ENCODE measurements at regions of chr2 and their contacts with region 1.

Region 1: DNA sequence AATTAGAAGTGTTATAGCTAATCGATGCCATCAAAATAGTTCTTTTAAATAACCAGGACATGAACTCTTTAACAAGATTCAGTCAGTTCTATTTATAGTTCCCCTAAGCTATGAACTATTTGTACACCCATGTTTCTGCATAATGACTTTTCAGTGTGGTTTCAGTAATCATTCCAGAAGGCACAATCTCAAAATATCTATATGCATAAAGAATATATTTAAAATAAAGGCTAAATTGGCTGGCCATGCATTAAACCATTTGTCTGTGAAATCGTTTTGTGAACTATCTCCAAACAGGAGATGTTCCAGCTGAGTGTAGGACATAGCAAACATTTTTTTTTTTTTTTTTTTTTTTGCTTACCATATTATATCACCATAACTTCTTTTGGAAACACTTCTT is 719.3 kb downstream of the PLCL1 start:
- DNase-seq: no peak
- H3K4me3 ChIP-seq: no peak overlapping the region
- CTCF ChIP-seq: no peak
- POLR2A ChIP-seq: no peak

Region 2: DNA sequence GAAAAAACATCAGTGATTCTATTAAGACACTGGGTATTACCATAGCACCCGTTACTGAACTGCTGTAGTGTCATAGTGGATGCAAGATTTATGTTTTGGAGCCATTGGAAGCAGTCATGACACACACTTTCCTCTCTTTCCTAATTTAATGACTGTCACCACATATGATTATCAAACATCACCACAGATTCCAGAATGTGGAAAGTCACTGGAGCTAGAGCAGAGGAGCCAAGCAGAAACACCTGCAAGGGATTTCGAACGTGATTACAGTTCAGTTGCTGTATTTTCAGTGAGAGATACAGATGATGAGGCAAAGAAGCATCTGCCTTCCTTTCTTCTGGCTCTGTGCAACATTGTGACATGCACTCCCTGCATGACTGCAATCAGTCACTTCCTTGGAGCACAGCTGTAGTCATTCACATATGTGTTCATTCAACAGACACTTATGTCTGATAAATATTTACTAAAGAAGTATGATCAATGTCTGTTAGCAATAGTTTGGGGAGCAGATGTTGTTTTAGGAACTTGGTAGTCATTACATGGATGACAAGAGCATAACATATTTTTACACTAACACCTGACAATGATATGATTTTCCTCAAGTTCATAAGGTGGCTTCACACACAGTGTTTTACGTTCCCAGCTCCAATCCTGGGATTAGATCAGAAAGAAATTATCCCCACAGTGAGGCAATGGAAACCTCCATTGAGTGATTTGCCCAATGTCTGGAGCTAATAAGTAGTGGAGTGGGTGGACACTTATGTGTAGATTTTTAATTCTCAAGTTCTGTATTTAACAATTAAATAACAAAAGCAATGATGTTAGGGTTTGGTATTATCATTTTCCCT is 302.7 kb before region 1 on chr2:
- intact Hi-C with region 1: loop called (anchors 5 kb)
- DNase-seq: no peak
- H3K4me3 ChIP-seq: no peak overlapping the region
- CTCF ChIP-seq: no peak
- POLR2A ChIP-seq: no peak

Region 3: GRCh38 chr2:198873503-198874471 is 350.1 kb after region 1 on chr2:
- intact Hi-C with region 1: no loop called
- DNase-seq: no peak
- H3K4me3 ChIP-seq: no peak overlapping the region
- CTCF ChIP-seq: no peak
- POLR2A ChIP-seq: no peak

Region 4: DNA sequence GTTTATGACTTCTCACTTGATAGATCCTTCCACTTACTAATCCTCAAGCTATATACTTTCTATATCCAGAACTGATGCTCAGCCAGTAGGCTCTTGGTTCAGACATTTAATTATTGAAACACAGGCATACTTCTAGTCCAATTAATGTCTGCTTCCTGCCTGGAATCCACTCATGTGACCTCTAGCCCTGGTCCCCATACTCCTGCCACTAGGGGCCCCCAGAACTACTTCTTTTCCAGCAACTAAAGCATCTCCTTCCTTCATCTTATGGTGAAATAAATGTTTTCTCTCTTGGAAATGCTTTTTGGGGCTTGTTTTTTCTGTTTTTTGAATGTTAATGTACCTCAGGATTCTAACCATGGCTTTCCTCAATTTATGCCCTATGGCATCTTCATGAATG is 406.5 kb after region 1 on chr2:
- intact Hi-C with region 1: no loop called
- DNase-seq: no peak
- H3K4me3 ChIP-seq: no peak overlapping the region
- CTCF ChIP-seq: no peak
- POLR2A ChIP-seq: no peak

Measured in lower leg skin (tissue), 4 donors.